WTC11 (cell line): ENCODE measurements at regions of chr19 and their contacts with region 1.

Region 1: GRCh38 chr19:40806488-40807468 is 7.8 kb downstream of the EGLN2 start:
- DNase-seq: peak; percentile 96
- ATAC-seq: peak; percentile 60
- H3K4me3 Mint-ChIP-seq: peak overlapping the region; percentile 39
- H3K27ac Mint-ChIP-seq: peak overlapping the region; percentile 85
- H3K4me1 Mint-ChIP-seq: peaks cover 73% of the 10 kb centered on the region
- H3K27me3 Mint-ChIP-seq: no peaks in the 10 kb centered on the region; the same call in 1 of the 2 replicates
- CTCF ChIP-seq: peak; percentile 77

Region 2: GRCh38 chr19:40592170-40592569 is 214.6 kb before region 1 on chr19:
- CTCF ChIA-PET with region 1: no interaction called
- POLR2A ChIA-PET with region 1: no interaction called
- DNase-seq: no peak
- ATAC-seq: peak; percentile 60
- H3K4me3 Mint-ChIP-seq: no peak overlapping the region
- H3K27ac Mint-ChIP-seq: no peak overlapping the region
- H3K4me1 Mint-ChIP-seq: peaks cover 11% of the 10 kb centered on the region
- H3K27me3 Mint-ChIP-seq: peaks cover 32% of the 10 kb centered on the region
- CTCF ChIP-seq: no peak

Region 3: DNA sequence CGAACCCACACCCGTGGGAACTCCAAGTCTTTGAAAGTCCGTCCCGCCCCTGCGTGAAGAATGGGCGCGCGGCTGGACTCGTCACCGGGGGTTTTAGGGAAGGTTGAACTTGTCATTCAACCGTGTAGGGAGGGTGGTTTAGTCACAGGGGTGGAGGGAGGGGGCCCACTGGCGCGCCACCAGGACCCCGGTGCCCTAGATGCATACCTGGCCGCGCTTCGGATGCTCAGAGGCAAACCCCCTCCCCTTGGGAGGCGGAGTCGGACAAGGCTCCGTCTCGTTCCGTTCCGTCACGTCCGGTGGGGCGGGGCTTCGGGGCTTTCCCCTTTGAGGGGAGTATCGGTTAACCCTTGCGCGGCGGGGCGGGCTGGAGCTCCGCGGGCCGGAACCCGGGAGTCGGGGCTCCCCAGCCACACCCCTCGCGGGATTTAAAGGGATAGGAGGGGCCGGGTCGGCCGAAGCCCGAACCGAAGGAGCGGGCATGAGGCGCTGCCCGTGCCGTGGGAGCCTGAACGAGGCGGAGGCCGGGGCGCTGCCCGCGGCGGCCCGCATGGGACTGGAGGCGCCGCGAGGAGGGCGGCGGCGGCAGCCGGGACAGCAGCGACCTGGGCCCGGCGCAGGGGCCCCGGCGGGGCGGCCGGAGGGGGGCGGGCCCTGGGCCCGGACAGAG is 90.0 kb before region 1 on chr19 and contains the starts of genes COQ8B and ITPKC:
- CTCF ChIA-PET with region 1: interaction called, 16 read pairs
- POLR2A ChIA-PET with region 1: interaction called, 3 read pairs
- DNase-seq: peak; percentile 100
- ATAC-seq: peak; percentile 55
- H3K4me3 Mint-ChIP-seq: peak within 1 kb of the TSS; percentile 98
- H3K27ac Mint-ChIP-seq: peak within 1 kb of the TSS; percentile 99
- H3K4me1 Mint-ChIP-seq: peaks cover 33% of the 10 kb centered on the region
- H3K27me3 Mint-ChIP-seq: no peaks in the 10 kb centered on the region
- CTCF ChIP-seq: no peak
- total RNA-seq, gene COQ8B: 55.6 to 62.9 TPM (median 59.9 TPM) in 3 replicates
- total RNA-seq, gene ITPKC: 10.4 to 13.8 TPM (median 10.6 TPM) in 3 replicates

Region 4: DNA sequence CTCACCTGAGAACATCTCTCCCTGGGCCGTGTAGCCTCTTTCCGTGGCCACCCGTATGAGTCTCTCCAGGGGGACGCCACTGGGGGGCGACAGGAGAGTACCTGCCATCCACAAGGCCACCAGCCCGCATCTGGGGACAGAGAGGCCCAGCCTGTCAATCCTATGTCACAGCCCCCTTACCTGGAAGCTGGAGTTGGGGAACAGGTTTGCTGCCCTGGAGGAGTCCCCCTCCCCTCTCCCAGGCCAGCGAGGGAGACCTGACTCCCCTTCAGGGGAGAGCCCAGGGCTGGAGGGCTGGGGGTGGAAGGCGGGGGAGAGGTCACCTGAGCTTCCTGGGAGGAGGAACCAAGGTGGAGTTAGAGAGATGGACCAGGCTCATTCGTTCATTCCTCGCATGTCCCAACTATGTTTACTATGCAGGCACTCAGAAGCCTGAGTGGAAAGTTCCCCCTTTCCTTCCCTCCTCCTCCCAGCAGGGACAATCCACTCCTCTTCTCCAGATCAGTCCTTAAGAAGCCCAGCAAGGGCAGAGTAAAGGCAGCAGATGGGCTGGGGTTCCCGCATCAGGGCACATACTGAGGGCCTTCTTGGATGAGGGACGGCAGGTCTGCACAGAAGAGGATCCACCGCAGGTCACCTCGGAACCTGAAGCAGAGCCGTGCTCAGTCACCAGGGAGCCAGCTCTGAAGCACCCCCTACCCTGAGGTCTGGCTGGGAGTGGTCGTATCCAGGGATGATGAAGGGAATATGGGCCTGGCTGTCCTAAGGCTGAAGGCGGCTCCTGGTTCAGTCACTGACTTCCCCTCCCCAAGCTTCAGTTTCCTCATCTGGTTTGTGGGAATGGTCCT is 62.0 kb before region 1 on chr19:
- CTCF ChIA-PET with region 1: interaction called, 27 read pairs
- POLR2A ChIA-PET with region 1: interaction called, 15 read pairs
- DNase-seq: peak; percentile 54
- ATAC-seq: peak; percentile 59
- H3K4me3 Mint-ChIP-seq: no peak overlapping the region
- H3K27ac Mint-ChIP-seq: peak overlapping the region; percentile 72
- H3K4me1 Mint-ChIP-seq: peaks cover 25% of the 10 kb centered on the region
- H3K27me3 Mint-ChIP-seq: no peaks in the 10 kb centered on the region
- CTCF ChIP-seq: 0 out of 2 replicates have a peak, but pooled peaks have one; percentile 26

Region 5: GRCh38 chr19:40785526-40785925 is 21.3 kb before region 1 on chr19:
- CTCF ChIA-PET with region 1: interaction called, 11 read pairs
- POLR2A ChIA-PET with region 1: no interaction called
- DNase-seq: no peak
- ATAC-seq: no peak
- H3K4me3 Mint-ChIP-seq: no peak overlapping the region
- H3K27ac Mint-ChIP-seq: no peak overlapping the region
- H3K4me1 Mint-ChIP-seq: peaks cover 3% of the 10 kb centered on the region; the same call in 1 of the 2 replicates
- H3K27me3 Mint-ChIP-seq: no peaks in the 10 kb centered on the region
- CTCF ChIP-seq: no peak

Region 6: DNA sequence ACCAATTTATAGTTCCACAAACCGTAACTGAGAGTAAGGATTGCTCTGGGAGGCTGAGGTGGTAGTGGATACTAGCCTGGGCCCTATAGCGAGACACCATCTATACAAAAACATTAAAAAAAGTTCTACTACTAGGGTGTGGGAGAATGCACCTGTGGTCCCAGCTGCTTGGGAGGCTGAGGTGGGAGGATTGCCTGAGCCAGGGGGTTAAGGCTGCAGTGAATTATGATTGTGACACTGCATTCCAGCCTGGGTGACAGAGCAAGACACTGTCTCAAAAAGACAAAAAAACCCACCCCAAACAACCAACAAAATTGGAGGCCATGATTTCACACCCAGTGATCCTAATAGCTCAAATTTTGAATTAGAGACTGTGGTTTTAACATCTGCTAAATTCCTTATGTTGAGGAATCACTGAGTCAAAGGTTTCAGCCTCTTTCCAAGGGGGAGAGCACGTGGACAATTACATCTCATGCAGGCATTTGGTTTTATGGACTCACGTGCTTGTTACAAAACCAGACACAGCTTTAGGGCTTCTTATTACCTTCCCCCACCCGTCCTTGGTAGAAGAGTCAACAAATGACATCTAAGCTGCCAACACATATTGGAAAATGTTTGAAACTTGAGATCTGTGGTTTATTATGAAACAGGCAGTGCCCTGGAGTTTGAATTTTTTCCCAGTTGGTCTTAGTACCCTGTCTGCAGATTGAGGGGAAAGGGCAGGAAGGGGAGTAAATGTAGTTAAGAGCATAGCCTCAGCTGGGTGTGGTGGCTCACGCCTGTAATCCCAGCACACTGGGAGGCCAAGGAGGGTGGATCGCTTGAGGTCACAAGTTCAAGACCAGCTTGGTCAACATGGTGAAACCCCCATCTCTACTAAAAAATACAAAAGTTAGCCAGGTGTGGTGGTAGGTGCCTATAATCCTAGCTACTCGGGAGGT is 25.0 kb after region 1 on chr19:
- CTCF ChIA-PET with region 1: no interaction called
- POLR2A ChIA-PET with region 1: no interaction called
- DNase-seq: no peak
- ATAC-seq: no peak
- H3K4me3 Mint-ChIP-seq: no peak overlapping the region
- H3K27ac Mint-ChIP-seq: no peak overlapping the region
- H3K4me1 Mint-ChIP-seq: no peaks in the 10 kb centered on the region
- H3K27me3 Mint-ChIP-seq: peaks cover 5% of the 10 kb centered on the region
- CTCF ChIP-seq: no peak

Region 7: GRCh38 chr19:40862785-40863184 is 56.0 kb after region 1 on chr19:
- CTCF ChIA-PET with region 1: no interaction called
- POLR2A ChIA-PET with region 1: no interaction called
- DNase-seq: no peak
- ATAC-seq: no peak
- H3K4me3 Mint-ChIP-seq: no peak overlapping the region
- H3K27ac Mint-ChIP-seq: no peak overlapping the region
- H3K4me1 Mint-ChIP-seq: no peaks in the 10 kb centered on the region
- H3K27me3 Mint-ChIP-seq: no peaks in the 10 kb centered on the region; the same call in 1 of the 2 replicates
- CTCF ChIP-seq: no peak